OCI-LY7 (cell line): ENCODE measurements at regions of chr1 and their contacts with region 1.

Region 1: GRCh38 chr1:113871597-113872113 is at the start of gene PTPN22:
- DNase-seq: peak; percentile 91
- H3K4me3 ChIP-seq: peak within 1 kb of the TSS; percentile 77
- H3K27ac ChIP-seq: peak within 1 kb of the TSS; percentile 93
- H3K4me1 ChIP-seq: peaks cover 62% of the 10 kb centered on the region
- CTCF ChIP-seq: no peak
- total RNA-seq, gene PTPN22: 27.5 and 29.4 TPM in 2 replicates

Region 2: GRCh38 chr1:113811888-113812660 is 59.6 kb before region 1 on chr1 and contains the start of gene RSBN1:
- CTCF ChIA-PET with region 1: no interaction called
- POLR2A ChIA-PET with region 1: interaction called, 10 read pairs
- intact Hi-C with region 1: loop called (anchors 1 kb)
- DNase-seq: peak; percentile 99
- H3K4me3 ChIP-seq: peak within 1 kb of the TSS; percentile 84
- H3K27ac ChIP-seq: peak within 1 kb of the TSS; percentile 93
- H3K4me1 ChIP-seq: peaks cover 30% of the 10 kb centered on the region
- CTCF ChIP-seq: no peak
- total RNA-seq, gene RSBN1: 10.8 and 12.5 TPM in 2 replicates

Region 3: GRCh38 chr1:113823069-113823468 is 48.6 kb before region 1 on chr1:
- CTCF ChIA-PET with region 1: no interaction called
- POLR2A ChIA-PET with region 1: no interaction called
- intact Hi-C with region 1: no loop called
- DNase-seq: no peak
- H3K4me3 ChIP-seq: no peak overlapping the region
- H3K27ac ChIP-seq: no peak overlapping the region
- H3K4me1 ChIP-seq: no peaks in the 10 kb centered on the region
- CTCF ChIP-seq: no peak

Region 4: GRCh38 chr1:113835642-113836307 is 35.9 kb before region 1 on chr1:
- CTCF ChIA-PET with region 1: interaction called, 3 read pairs
- POLR2A ChIA-PET with region 1: interaction called, 8 read pairs
- intact Hi-C with region 1: loop called (anchors 5 kb)
- DNase-seq: peak; percentile 71
- H3K4me3 ChIP-seq: no peak overlapping the region
- H3K27ac ChIP-seq: no peak overlapping the region
- H3K4me1 ChIP-seq: no peaks in the 10 kb centered on the region
- CTCF ChIP-seq: peak; percentile 91

Region 5: DNA sequence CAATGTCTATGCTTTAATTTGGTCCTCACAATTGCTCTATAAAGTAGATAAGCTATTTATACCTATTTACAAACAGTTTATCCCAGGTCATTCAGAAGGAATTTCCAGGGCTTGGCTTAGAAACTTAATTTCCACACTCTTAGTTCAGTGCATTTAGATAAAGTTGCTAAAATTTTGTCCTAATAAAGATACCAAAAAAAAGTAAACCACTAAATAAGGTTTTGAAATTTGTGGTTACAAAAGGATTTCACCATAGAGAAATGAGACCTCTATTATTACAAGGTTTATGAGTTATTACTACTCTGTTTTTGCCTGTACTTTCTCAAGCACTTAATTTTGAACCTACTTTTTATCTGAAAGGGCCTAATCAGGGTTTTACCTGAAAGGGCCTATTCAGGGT is 22.6 kb before region 1 on chr1:
- CTCF ChIA-PET with region 1: no interaction called
- POLR2A ChIA-PET with region 1: no interaction called
- intact Hi-C with region 1: no loop called
- DNase-seq: no peak
- H3K4me3 ChIP-seq: no peak overlapping the region
- H3K27ac ChIP-seq: no peak overlapping the region
- H3K4me1 ChIP-seq: no peaks in the 10 kb centered on the region
- CTCF ChIP-seq: no peak

Region 6: GRCh38 chr1:113859478-113860175 is 12.0 kb before region 1 on chr1:
- CTCF ChIA-PET with region 1: interaction called, 10 read pairs
- POLR2A ChIA-PET with region 1: interaction called, 57 read pairs
- intact Hi-C with region 1: no loop called
- DNase-seq: peak; percentile 85
- H3K4me3 ChIP-seq: peak overlapping the region; percentile 58
- H3K27ac ChIP-seq: peak overlapping the region; percentile 94
- H3K4me1 ChIP-seq: peaks cover 70% of the 10 kb centered on the region
- CTCF ChIP-seq: no peak

Region 7: GRCh38 chr1:113887402-113888175 is 15.9 kb after region 1 on chr1 and contains the start of gene BCL2L15:
- CTCF ChIA-PET with region 1: no interaction called
- POLR2A ChIA-PET with region 1: interaction called, 15 read pairs
- intact Hi-C with region 1: no loop called
- DNase-seq: no peak
- H3K4me3 ChIP-seq: no peak within 1 kb of the TSS
- H3K27ac ChIP-seq: no peak within 1 kb of the TSS
- H3K4me1 ChIP-seq: no peaks in the 10 kb centered on the region
- CTCF ChIP-seq: no peak
- total RNA-seq, gene BCL2L15: 0.46 and 0.82 TPM in 2 replicates

Region 8: GRCh38 chr1:113904674-113905434 is 33.2 kb after region 1 on chr1 and contains the starts of genes AP4B1 and DCLRE1B:
- CTCF ChIA-PET with region 1: no interaction called
- POLR2A ChIA-PET with region 1: interaction called, 8 read pairs
- intact Hi-C with region 1: loop called (anchors 1 kb)
- DNase-seq: peak; percentile 100
- H3K4me3 ChIP-seq: peak within 1 kb of the TSS; percentile 99
- H3K27ac ChIP-seq: peak within 1 kb of the TSS; percentile 77
- H3K4me1 ChIP-seq: peaks cover 27% of the 10 kb centered on the region
- CTCF ChIP-seq: peak; percentile 71
- total RNA-seq, gene AP4B1: 37.7 and 45.3 TPM in 2 replicates
- total RNA-seq, gene DCLRE1B: 17.3 and 20.1 TPM in 2 replicates